ENCODE measurements at regions of chr2 and their contacts with region 1.

Region 1: DNA sequence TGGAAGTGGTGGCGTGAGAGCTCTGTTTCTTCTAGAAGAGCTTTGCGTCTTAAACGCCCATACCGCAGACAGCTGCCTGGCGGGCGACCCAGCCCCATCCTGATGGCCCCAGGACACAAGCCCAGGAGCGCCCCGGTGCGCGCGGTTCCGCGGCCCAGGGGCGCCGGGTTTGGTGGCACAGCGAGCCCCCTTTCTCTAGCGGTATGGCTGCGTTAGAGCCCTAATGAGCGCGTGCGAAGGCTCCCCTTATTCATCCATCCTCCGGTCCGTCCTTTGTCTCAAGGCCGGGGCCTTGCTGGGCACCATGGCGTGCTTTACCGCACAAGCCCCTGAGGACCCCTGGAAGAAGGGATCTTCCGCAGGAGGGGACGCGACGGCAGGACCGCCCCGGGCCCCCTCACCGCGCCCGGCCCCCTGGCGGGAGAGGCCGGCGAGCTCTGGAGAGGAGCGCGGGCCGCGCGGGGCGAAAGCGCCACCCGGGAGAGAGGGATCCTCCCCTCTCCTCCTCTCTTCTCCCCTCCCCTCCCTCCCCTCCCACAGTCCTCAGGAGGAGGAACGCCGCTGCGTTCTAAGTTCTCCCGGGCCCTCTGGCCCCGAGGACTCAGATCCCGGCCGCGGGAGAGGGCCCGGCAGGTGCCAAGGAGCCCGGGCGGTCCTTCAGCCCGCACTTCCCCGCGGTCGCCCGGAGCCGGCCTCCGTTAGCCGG is 626 bp upstream of the SLC1A4 start:
- DNase-seq: peak; percentile 60 to 69
- H3K4me3 ChIP-seq: peak overlapping the region; percentile 60
- H3K4me3 Mint-ChIP-seq: peak overlapping the region; percentile 92
- H3K27ac Mint-ChIP-seq: peak overlapping the region; percentile 28
- H3K4me1 ChIP-seq: peaks cover 9% of the 10 kb centered on the region; the same call in 1 of the 2 replicates
- H3K4me1 Mint-ChIP-seq: peaks cover 26% of the 10 kb centered on the region
- H3K27me3 ChIP-seq: no peaks in the 10 kb centered on the region
- H3K27me3 Mint-ChIP-seq: peaks cover 2% of the 10 kb centered on the region
- CTCF ChIP-seq: peak; percentile 28 to 78

Region 2: GRCh38 chr2:64562148-64562784 is 426.3 kb before region 1 on chr2:
- CTCF ChIA-PET with region 1: no interaction called
- POLR2A ChIA-PET with region 1: no interaction called
- intact Hi-C with region 1: no loop called
- DNase-seq: no peak
- H3K4me3 ChIP-seq: no peak overlapping the region
- H3K4me3 Mint-ChIP-seq: no peak overlapping the region
- H3K27ac Mint-ChIP-seq: no peak overlapping the region
- H3K4me1 ChIP-seq: no peaks in the 10 kb centered on the region
- H3K4me1 Mint-ChIP-seq: no peaks in the 10 kb centered on the region
- H3K27me3 ChIP-seq: no peaks in the 10 kb centered on the region
- H3K27me3 Mint-ChIP-seq: no peaks in the 10 kb centered on the region
- CTCF ChIP-seq: peak in 1 of 2 experiments; percentile 23

Region 3: DNA sequence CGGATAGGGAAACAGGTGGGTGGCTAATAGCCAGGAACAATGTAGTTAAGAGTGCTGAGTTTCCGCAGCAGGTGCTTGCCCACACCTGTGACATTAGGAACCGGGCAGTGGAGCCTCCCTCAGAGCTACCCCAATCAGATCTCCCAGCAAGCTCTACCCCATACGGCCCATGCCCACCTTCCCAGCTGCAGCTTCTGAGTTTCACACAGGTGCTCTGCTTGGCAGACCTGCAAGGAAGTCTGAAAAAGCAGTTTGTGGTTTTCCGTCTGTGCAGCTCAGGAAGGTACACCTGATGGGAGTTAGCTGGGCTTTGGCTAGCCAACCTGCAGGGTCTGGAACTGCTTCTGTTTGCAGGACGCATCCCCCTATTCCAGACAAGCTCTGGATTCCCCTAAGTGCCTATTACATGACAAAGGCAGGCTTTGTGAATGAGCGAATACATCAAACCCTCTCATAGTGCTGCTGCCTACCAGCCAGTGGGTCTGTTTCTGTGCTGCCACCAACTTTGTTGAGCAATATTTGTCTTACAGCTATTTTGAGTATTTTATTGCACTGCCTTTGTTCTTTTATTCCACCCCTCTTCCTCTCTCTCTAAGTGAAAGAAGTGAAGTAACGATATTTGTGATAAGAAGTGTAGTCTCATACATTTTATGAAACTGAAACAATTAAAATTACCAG is 42.9 kb after region 1 on chr2:
- CTCF ChIA-PET with region 1: no interaction called
- POLR2A ChIA-PET with region 1: no interaction called
- intact Hi-C with region 1: loop called (anchors 5 kb)
- DNase-seq: peak in 1 of 2 experiments; percentile 34
- H3K4me3 ChIP-seq: no peak overlapping the region
- H3K4me3 Mint-ChIP-seq: peak overlapping the region; percentile 49
- H3K27ac Mint-ChIP-seq: peak overlapping the region; percentile 70
- H3K4me1 ChIP-seq: peaks cover 17% of the 10 kb centered on the region
- H3K4me1 Mint-ChIP-seq: peaks cover 15% of the 10 kb centered on the region
- H3K27me3 ChIP-seq: no peaks in the 10 kb centered on the region
- H3K27me3 Mint-ChIP-seq: no peaks in the 10 kb centered on the region
- CTCF ChIP-seq: no peak

Region 4: GRCh38 chr2:65040400-65041261 is 52.1 kb after region 1 on chr2:
- CTCF ChIA-PET with region 1: no interaction called
- POLR2A ChIA-PET with region 1: no interaction called
- intact Hi-C with region 1: loop called (anchors 2 kb)
- DNase-seq: peak; percentile 83 to 87
- H3K4me3 ChIP-seq: no peak overlapping the region
- H3K4me3 Mint-ChIP-seq: peak overlapping the region; percentile 10
- H3K27ac Mint-ChIP-seq: no peak overlapping the region
- H3K4me1 ChIP-seq: no peaks in the 10 kb centered on the region
- H3K4me1 Mint-ChIP-seq: peaks cover 6% of the 10 kb centered on the region
- H3K27me3 ChIP-seq: no peaks in the 10 kb centered on the region
- H3K27me3 Mint-ChIP-seq: no peaks in the 10 kb centered on the region
- CTCF ChIP-seq: peak; percentile 90 to 97